ENCODE measurements at regions of chr6 and their contacts with region 1.

Region 1: GRCh38 chr6:16939839-16940238 is 162.0 kb upstream of the STMND1 start:
- DNase-seq: no peak
- ATAC-seq: no peak
- H3K4me3 ChIP-seq: no peak overlapping the region
- H3K4me3 Mint-ChIP-seq: no peak overlapping the region
- H3K27ac ChIP-seq: no peak overlapping the region
- H3K27ac Mint-ChIP-seq: no peak overlapping the region
- H3K4me1 ChIP-seq: no peaks in the 10 kb centered on the region
- H3K4me1 Mint-ChIP-seq: no peaks in the 10 kb centered on the region
- H3K27me3 ChIP-seq: peaks cover 0 to 1% of the 10 kb centered on the region in 2 experiments
- H3K27me3 Mint-ChIP-seq: peaks cover 14% of the 10 kb centered on the region
- CTCF ChIP-seq: no peak

Region 2: DNA sequence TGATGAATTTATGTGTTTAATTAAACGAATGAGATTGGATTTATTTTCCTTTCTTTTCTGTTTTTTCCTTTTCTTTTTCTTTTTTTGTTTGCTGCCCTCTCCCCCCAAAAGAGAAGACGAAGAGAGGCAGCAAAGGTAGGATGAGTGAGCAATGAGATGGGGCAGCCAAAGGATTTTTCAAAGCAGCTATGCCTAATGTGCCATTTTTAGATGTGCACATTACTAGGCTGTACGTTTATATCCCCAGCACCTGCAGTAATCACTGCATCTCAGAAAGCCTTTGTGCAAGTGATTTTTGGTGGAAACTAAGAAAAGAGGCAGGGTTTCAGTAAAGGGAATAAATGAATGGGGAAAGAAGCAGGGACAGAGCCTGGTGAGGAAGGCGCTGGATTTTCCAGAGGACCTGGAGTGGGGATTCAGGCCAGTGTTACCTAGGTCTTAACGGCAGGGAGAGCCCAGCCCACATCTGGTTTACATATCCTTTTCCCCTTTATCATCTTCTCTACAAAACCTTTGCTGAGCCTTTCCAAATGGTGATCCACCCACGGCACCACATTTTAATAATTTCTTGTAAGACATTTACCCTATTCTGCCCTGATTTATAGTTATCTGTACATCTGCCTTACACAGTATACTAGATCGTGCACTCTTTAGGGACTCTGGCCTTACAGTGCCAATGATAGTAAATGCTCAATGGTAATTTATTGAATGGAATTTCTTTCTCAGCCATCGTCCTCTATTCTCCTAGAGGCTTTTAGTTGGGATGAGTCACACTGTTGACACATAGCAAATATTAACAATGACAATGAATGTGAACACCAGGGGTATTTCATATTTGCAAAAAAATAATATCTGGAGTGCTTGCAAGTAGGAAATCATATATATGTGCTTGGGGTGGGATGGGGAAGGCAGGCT is 140.3 kb before region 1 on chr6:
- CTCF ChIA-PET with region 1: no interaction called
- POLR2A ChIA-PET with region 1: no interaction called
- intact Hi-C with region 1: loop called in 1 of 2 experiments (anchors 5 kb)
- DNase-seq: no peak
- ATAC-seq: no peak
- H3K4me3 ChIP-seq: no peak overlapping the region
- H3K4me3 Mint-ChIP-seq: no peak overlapping the region
- H3K27ac ChIP-seq: no peak overlapping the region
- H3K27ac Mint-ChIP-seq: no peak overlapping the region
- H3K4me1 ChIP-seq: no peaks in the 10 kb centered on the region
- H3K4me1 Mint-ChIP-seq: no peaks in the 10 kb centered on the region
- H3K27me3 ChIP-seq: no peaks in the 10 kb centered on the region
- H3K27me3 Mint-ChIP-seq: no peaks in the 10 kb centered on the region
- CTCF ChIP-seq: no peak

Region 3: DNA sequence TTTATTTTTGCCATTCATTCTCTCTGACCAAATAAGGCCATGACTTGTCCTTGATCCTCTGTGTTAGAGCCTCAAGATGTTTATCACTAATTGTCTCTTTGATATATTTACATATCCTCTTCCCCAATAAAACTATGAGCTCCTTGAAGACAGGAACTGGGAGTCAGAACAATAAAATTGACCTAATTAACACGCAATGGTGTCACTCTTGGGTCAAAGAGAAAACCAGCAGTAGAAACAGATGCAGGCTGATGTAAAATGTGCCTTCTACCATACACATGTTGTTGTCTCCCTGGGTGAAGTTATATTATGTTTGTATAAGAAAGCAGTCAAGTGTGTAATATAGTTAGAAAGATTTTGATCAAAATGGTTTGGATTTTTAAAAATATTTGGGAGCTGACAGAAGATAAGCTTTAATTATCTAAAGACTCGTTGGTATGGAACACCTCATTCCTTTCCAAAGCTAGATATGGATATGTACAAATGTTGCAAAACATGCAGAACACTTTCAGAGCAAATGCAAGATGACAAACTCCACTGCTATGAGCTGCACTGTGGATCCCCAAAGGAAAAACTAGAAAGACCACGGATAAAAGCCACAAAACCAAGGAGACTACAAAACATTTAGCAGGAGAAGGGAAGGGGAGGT is 52.3 kb after region 1 on chr6:
- CTCF ChIA-PET with region 1: no interaction called
- POLR2A ChIA-PET with region 1: no interaction called
- intact Hi-C with region 1: no loop called
- DNase-seq: no peak
- ATAC-seq: no peak
- H3K4me3 ChIP-seq: no peak overlapping the region
- H3K4me3 Mint-ChIP-seq: no peak overlapping the region
- H3K27ac ChIP-seq: no peak overlapping the region
- H3K27ac Mint-ChIP-seq: no peak overlapping the region
- H3K4me1 ChIP-seq: no peaks in the 10 kb centered on the region
- H3K4me1 Mint-ChIP-seq: no peaks in the 10 kb centered on the region
- H3K27me3 ChIP-seq: no peaks in the 10 kb centered on the region
- H3K27me3 Mint-ChIP-seq: peaks cover 26% of the 10 kb centered on the region
- CTCF ChIP-seq: no peak